PC-3 (cell line): ENCODE measurements at regions of chr4 and their contacts with region 1.

Region 1: DNA sequence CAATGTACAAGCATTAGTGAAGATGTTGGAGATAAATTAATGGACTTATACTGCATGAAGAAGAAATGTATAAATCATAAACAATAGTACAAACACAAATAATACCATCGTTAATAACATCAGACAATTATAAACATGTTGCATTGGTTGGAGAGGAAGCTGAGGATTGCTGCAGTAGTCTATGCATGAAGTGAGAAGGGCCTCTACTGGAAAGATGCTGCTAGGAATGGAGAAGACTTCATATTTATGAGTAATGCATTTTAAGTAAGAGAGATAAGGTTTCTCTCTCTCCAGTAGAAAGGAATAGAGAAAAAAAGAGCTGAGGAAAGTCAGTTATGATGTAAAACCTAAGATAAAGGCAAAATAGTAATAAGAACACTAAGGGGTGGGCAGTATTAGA is 247.8 kb downstream of the GRID2 start:
- DNase-seq: no peak
- ATAC-seq: no peak
- H3K4me3 ChIP-seq: no peak overlapping the region
- H3K27ac ChIP-seq: no peak overlapping the region
- H3K4me1 ChIP-seq: no peaks in the 10 kb centered on the region
- H3K27me3 ChIP-seq: no peaks in the 10 kb centered on the region
- CTCF ChIP-seq: peak; percentile 21; the same call in 1 of the 2 replicates

Region 2: GRCh38 chr4:92387459-92388069 is 164.1 kb before region 1 on chr4:
- CTCF ChIA-PET with region 1: no interaction called
- POLR2A ChIA-PET with region 1: no interaction called
- intact Hi-C with region 1: loop called (anchors 10 kb)
- DNase-seq: peak; percentile 69
- ATAC-seq: peak; percentile 65
- H3K4me3 ChIP-seq: no peak overlapping the region
- H3K27ac ChIP-seq: no peak overlapping the region
- H3K4me1 ChIP-seq: no peaks in the 10 kb centered on the region
- H3K27me3 ChIP-seq: no peaks in the 10 kb centered on the region
- CTCF ChIP-seq: peak; percentile 73

Region 3: GRCh38 chr4:92535599-92535998 is 16.0 kb before region 1 on chr4:
- CTCF ChIA-PET with region 1: no interaction called
- POLR2A ChIA-PET with region 1: no interaction called
- intact Hi-C with region 1: no loop called
- DNase-seq: no peak
- ATAC-seq: no peak
- H3K4me3 ChIP-seq: no peak overlapping the region
- H3K27ac ChIP-seq: no peak overlapping the region
- H3K4me1 ChIP-seq: no peaks in the 10 kb centered on the region
- H3K27me3 ChIP-seq: no peaks in the 10 kb centered on the region
- CTCF ChIP-seq: no peak